ENCODE measurements at regions of chr13 and their contacts with region 1.

Region 1: DNA sequence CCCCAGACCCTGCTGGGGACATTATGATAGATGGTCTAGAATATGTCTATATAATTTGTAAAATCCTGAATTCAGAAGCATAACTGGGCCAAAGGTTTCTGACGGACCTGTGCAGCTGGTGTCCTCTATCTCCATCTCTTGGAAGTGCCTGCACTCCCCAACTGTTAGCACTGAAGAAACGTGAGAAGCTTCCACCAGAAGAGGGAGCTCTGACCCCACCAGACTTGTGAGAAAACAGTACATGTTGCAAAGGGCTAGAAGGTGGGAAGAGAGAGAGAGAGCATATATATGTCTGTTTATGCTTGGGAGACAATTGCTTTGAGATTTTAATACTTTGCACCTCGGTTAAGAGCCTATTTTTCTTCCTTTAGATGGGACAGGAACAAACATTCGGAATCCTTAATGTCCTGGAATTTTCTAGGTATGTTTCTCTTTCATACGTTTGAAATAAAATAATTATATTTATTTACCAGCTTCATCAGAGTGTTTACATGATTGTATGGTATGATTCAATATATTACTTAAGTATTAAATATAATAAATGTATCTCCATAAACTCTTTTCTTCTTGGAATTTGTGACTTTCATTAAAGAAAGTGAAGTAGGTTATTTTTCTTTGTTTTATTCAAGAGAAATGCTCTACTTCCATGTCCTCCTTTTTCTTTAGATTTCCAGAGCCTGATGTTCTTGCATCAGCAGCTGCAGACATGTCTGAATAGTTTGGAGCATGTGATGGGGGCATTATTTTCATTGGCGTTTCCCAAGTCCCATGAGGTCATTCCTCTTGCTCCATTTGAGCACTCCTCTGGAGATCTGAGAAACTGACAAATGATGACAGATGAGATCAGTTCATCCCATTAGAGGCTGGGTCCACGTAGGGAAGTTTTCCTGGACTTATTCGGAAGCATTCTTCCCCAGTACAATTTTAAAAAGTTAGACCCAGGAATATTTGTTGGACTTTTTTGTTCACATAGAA is 202.9 kb downstream of the ATP8A2 start:
- DNase-seq: peak; percentile 47 to 96 (median 88)

Region 2: DNA sequence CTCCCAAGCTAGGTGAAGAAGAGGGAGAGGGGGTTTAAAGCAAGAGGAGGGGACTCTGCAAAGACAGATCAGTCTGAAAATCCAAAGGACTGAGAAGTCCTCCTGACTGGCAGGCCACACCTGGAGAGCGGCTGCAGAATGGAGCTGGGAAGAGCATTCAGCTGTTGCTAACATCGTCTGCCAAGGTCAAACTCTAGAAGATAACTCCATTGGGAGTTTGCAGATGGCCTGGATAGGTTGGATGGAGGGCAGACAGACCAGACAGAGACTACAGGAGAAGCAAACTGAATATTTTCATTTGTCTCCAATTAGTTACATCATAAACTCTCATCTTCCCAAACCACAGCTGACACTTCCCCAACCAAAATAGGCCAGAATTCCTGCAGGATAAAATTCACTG is 497.0 kb after region 1 on chr13:
- intact Hi-C with region 1: loop called (anchors 2 kb)
- DNase-seq: no peak

Measured in head of caudate nucleus (tissue), 42 donors.